H1 (cell line): ENCODE measurements at regions of chr9 and their contacts with region 1.

Region 1: GRCh38 chr9:34332076-34332964 is 3.0 kb downstream of the NUDT2 start:
- DNase-seq: no peak
- H3K4me3 ChIP-seq: no peak overlapping the region
- H3K27ac ChIP-seq: no peak overlapping the region
- H3K4me1 ChIP-seq: peaks cover 2 to 10% (median 9%) of the 10 kb centered on the region in 4 experiments; a peak in 5 of 7 replicates
- H3K27me3 ChIP-seq: no peaks in the 10 kb centered on the region
- CTCF ChIP-seq: peak in 2 of 3 experiments; percentile 41 to 43; a peak in 2 of 4 replicates
- EP300 ChIP-seq: no peak
- POLR2A ChIP-seq: no peak
- RAD21 ChIP-seq: peak; percentile 70 to 78

Region 2: DNA sequence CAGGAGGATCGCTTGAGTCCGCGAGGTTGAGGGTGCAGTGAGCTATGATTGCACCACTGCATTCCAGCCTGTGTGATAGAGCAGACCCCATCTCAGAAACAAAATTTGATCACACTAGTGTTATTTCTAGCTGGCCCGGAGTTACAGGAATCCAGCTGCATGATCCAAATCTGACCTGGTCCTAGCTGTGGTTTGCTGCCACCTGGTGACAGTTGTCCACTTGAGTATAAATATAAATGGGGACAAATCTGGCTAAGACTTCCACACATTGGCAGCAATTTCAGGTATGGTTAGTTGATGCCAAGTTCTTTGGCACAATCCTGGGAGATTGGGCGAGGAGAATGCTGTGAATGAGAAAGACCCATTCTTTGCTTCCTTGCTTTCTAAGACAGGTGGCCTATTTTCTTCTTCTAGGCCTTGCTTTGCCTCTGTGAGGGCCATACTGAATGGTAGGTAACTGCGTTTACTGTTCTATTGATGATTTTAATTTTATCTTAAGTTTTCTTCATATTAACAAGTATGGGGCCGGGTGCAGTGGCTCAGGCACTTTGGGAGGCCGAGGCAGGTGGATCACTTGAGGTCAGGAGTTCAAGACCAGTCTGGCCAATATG is 480.0 kb before region 1 on chr9:
- CTCF ChIA-PET with region 1: no interaction called
- POLR2A ChIA-PET with region 1: no interaction called
- DNase-seq: peak; percentile 5 to 55
- H3K4me3 ChIP-seq: no peak overlapping the region
- H3K27ac ChIP-seq: no peak overlapping the region
- H3K4me1 ChIP-seq: peaks cover 0 to 6% (median 2%) of the 10 kb centered on the region in 4 experiments; a peak in 4 of 7 replicates
- H3K27me3 ChIP-seq: no peaks in the 10 kb centered on the region
- CTCF ChIP-seq: peak; percentile 20 to 61 (median 57)
- EP300 ChIP-seq: no peak
- POLR2A ChIP-seq: no peak
- RAD21 ChIP-seq: peak; percentile 59 to 72; a peak in 3 of 4 replicates

Region 3: DNA sequence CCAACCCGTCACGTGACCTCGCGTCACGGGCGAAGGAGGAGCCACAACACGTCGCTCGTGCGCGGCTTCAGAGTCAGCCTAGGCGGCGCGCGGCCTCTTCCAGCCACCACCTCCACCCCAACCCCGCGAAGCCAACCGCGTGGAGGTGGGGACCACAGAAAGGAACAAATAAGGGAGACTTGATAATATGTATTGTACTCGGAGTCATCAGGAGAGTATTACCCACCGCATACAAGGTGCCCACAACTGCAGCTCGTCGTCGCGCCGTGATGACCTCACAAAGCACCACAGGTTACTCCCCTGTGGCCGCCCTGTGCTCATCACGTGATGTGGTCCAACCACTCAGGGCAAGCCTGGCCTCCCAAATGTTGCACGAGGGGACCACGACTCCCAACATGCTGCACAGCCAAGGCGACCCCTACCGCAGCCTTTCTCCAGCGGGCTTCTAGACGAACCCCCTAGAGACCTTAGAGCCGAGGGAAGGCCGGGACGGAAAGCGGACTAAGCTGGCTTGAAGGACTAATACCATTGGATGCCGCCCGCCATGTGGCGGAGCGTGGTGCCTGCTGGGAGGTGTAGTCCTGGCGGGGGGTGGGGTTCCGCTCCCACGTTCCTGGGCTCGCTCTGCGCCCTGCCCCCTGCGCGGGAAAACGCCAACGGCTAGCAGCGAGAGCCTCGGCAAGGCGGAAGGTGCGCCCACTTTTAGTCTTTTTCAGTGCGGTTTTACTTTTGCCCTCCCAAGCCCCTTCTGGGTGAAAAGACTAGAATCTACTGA is 283.2 kb before region 1 on chr9:
- CTCF ChIA-PET with region 1: no interaction called
- POLR2A ChIA-PET with region 1: no interaction called
- DNase-seq: peak; percentile 88 to 98
- H3K4me3 ChIP-seq: peak overlapping the region; percentile 75 to 97 (median 91)
- H3K27ac ChIP-seq: peak overlapping the region; percentile 100
- H3K4me1 ChIP-seq: peaks cover 0 to 15% (median 6%) of the 10 kb centered on the region in 4 experiments; a peak in 4 of 7 replicates
- H3K27me3 ChIP-seq: no peaks in the 10 kb centered on the region
- CTCF ChIP-seq: no peak
- EP300 ChIP-seq: 0 out of 3 replicates have a peak, but pooled peaks of 1 of the 2 experiments have one; percentile 16
- POLR2A ChIP-seq: peak; percentile 93 to 98
- RAD21 ChIP-seq: peak in 1 of 2 experiments; percentile 0; a peak in 1 of 4 replicates

Region 4: DNA sequence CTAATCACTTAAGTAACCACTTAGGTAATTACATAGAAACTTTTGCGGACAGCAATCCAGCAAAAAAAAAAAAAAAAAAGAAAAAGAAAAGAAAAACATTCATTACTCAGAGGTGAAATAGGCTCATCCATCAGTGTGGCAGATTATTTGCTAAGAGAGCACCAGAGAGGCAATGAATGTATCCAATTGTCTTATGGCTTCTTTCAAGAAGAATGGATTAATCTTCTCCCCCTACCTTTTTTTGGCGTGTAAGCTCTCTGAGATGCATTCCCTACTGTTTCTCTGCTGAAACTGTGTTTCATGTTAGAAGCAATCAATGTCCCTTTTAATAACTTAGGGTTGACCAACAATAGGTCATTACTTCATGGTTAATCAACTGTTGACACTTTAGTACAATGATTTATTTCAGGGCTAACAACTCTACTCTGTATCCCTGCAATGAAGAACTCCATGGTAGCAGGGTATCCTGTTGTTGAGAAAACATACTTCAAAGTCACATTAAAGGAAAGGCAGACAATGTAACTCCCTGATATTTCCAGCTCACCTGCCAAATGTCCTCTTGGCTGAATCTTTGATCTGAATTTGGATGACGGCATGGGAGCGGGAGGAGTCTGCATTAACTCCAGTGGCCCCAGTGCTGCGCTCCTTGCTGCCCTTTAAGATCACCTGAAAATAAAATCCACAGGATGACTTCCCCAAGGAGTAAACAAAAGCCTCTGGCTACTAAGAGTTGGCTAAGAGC is 60.9 kb before region 1 on chr9:
- CTCF ChIA-PET with region 1: no interaction called
- POLR2A ChIA-PET with region 1: no interaction called
- DNase-seq: no peak
- H3K4me3 ChIP-seq: no peak overlapping the region
- H3K27ac ChIP-seq: no peak overlapping the region
- H3K4me1 ChIP-seq: no peaks in the 10 kb centered on the region
- H3K27me3 ChIP-seq: no peaks in the 10 kb centered on the region
- CTCF ChIP-seq: no peak
- EP300 ChIP-seq: no peak
- POLR2A ChIP-seq: no peak
- RAD21 ChIP-seq: no peak

Region 5: GRCh38 chr9:34343090-34343489 is 10.8 kb after region 1 on chr9:
- CTCF ChIA-PET with region 1: interaction called, 56 read pairs
- POLR2A ChIA-PET with region 1: interaction called, 11 read pairs
- DNase-seq: no peak
- H3K4me3 ChIP-seq: no peak overlapping the region
- H3K27ac ChIP-seq: no peak overlapping the region
- H3K4me1 ChIP-seq: no peaks in the 10 kb centered on the region
- H3K27me3 ChIP-seq: no peaks in the 10 kb centered on the region
- CTCF ChIP-seq: no peak
- EP300 ChIP-seq: no peak
- POLR2A ChIP-seq: no peak
- RAD21 ChIP-seq: no peak

Region 6: GRCh38 chr9:34376596-34377403 is 44.5 kb after region 1 on chr9 and contains the start of gene MYORG:
- CTCF ChIA-PET with region 1: interaction called, 350 read pairs
- POLR2A ChIA-PET with region 1: interaction called, 9 read pairs
- DNase-seq: peak; percentile 98
- H3K4me3 ChIP-seq: peak within 1 kb of the TSS; percentile 61 to 75 (median 68)
- H3K27ac ChIP-seq: no peak within 1 kb of the TSS
- H3K4me1 ChIP-seq: peaks cover 6 to 15% (median 7%) of the 10 kb centered on the region in 4 experiments
- H3K27me3 ChIP-seq: peaks cover 3 to 26% (median 22%) of the 10 kb centered on the region in 4 experiments
- CTCF ChIP-seq: no peak
- EP300 ChIP-seq: no peak
- POLR2A ChIP-seq: no peak; a peak in 1 of 3 replicates
- RAD21 ChIP-seq: no peak
- total RNA-seq, gene MYORG: 5.0 and 5.9 TPM in 2 replicates